ENCODE measurements at regions of chr9 and their contacts with region 1.

Region 1: GRCh38 chr9:72038890-72039410 is 21.5 kb downstream of the C9orf57 start:
- DNase-seq: peak; percentile 74
- ATAC-seq: peak; percentile 86 to 88

Region 2: GRCh38 chr9:72271613-72272478 is 232.9 kb after region 1 on chr9:
- intact Hi-C with region 1: loop called (anchors 1 to 2 kb)
- DNase-seq: no peak
- ATAC-seq: peak in 1 of 2 donors; percentile 27

Region 3: GRCh38 chr9:72592502-72593403 is 553.8 kb after region 1 on chr9:
- intact Hi-C with region 1: loop called in 1 of 2 experiments (anchors 10 kb)
- DNase-seq: no peak
- ATAC-seq: peak; percentile 74 to 87

Region 4: GRCh38 chr9:72827950-72828731 is 789.2 kb after region 1 on chr9:
- intact Hi-C with region 1: loop called in 1 of 2 experiments (anchors 10 kb)
- DNase-seq: no peak
- ATAC-seq: no peak